Left cardiac atrium (tissue), 4 donors: ENCODE measurements at regions of chr10 and their contacts with region 1.

Region 1: DNA sequence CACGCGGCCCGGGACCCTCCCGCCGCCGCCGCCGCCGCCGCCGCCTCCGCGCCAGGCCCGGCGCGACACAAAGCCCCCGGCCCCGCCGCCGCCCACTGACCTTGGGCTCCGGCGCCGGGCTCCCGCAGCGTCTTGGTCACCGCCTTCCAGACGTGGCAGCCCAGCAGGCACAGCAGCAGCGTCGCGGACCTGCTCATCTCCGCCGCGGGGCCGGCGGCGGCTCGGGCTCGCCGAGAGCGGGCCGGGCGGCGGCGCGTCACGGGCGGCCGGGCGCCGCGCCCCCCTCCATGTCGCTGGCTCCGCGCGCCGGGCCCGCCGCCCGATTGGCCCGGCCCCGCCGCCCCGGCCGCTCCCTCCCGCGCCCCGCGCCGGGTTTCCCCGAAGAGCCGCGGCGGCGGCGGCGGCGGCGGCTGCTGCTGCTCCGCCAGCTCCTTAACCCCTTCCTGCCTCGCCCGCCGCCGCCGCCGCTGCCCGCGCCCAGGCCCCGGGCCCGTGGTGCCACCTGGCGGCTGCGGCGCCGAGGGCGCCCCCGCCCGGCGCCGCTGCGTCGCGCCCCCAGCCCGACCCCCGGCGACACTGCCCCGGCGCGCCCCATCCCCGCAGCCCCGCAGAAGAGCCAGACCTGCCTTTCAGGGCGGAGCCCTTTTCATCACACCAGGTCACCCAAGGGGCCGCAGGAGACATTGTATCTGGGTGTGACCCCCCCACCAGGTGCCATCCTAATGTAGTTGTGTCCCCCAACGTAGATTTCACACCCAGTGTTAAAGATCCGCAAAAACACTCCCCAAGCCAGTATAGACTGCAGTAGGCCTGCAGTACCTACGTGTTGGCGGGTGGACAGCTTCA is at the start of gene FAM171A1:
- DNase-seq: peak; percentile 70
- ATAC-seq: peak; percentile 75 to 86
- total RNA-seq, gene FAM171A1: 14.8 to 16.1 TPM

Region 2: GRCh38 chr10:14688606-14689005 is 682.5 kb before region 1 on chr10:
- intact Hi-C with region 1: no loop called
- DNase-seq: no peak
- ATAC-seq: peak in 1 of 2 donors; percentile 71

Region 3: DNA sequence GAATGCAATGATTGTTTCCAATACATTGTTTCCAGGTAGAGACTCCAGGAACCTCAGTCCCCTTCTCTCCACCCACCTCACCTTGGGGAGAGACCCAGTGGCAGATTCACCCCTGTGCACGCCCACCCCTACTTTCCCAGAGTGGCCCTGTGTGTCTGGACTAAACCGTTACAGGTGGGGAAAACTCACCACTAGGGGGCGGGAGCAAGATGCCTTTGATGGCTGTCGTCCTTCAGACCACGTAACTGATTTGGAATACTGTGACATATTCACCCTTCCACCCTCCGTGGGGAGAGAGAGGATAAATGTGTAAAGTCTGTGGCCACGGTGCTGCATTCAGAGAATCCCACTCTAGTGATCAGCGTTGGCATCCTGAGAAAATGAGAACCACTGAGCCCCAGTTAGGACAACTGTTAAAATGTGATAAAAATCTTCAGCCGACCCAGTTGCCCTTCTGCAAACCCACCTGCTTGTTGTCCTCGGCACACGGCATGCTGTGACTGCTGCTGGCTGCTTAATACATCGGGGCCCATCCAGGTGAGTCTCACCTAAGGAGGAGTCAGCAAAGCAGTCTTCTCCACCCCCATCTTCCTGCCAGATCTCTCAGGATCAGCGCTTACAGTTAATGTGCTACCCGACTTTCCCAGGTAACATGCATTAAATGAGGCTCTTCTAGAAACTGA is 161.1 kb before region 1 on chr10:
- intact Hi-C with region 1: loop called (anchors 2 to 5 kb)
- DNase-seq: peak; percentile 88
- ATAC-seq: peak; percentile 83 to 88

Region 4: DNA sequence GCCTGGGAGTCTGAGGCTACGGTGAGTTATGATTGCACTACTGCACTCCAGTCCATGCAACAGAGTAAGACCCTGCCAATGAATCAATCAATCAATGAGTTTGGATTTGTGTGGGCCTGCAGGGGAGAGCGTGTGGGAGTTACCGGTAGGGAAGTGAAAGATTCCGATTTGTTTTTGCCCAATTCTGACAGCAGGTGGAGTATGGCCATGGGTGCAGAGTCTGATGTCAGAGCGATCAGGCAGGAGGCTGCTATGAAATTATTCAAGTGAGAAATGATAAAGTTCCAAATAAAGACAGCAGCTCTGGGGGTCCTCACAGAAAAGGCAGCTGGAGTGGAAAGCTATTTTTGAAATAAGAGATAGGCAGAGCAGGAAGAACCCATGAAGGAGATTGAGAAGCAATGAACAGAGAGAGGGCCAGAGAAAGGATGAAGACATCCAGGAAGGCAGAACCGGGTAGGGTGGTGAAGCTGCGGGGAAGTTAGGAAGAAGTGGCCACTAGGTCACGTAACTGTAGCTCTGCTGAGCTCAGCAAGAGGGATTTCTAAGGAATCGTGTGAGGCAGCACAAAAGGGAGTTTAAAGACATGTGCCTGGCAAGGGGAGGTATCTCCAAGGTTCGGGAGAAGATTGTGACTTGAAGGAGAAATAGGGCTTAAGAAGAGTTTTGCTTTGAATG is 108.9 kb before region 1 on chr10:
- intact Hi-C with region 1: loop called (anchors 5 to 10 kb)
- DNase-seq: no peak
- ATAC-seq: peak; percentile 67 to 75